ENCODE measurements at regions of chr1 and their contacts with region 1.

Region 1: DNA sequence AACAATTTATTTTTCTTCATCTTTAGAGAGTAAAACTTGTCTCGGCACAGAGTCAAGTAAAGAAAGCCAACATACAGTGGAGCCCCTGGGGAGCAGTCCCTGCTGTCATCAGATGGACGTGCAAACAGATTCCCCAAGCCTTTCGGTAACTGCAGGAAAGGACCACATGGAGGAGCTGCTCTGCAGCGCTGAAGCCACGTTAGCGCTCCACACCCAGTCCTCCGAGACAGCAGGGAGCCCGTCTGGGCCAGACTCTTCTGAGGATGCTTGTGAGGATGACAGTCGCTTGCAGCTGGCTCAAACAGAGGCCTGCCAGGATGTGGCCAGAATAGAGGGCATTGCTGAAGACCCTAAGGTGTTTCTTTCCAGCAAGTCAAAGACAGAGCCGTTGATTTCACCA is 77.1 kb upstream of the SCCPDH start:
- DNase-seq: no peak
- H3K4me3 ChIP-seq: no peak overlapping the region
- H3K27ac ChIP-seq: no peak overlapping the region
- H3K4me1 ChIP-seq: no peaks in the 10 kb centered on the region
- H3K27me3 ChIP-seq: no peaks in the 10 kb centered on the region
- CTCF ChIP-seq: peak in 1 of 4 experiments; percentile 21
- POLR2A ChIP-seq: no peak

Region 2: DNA sequence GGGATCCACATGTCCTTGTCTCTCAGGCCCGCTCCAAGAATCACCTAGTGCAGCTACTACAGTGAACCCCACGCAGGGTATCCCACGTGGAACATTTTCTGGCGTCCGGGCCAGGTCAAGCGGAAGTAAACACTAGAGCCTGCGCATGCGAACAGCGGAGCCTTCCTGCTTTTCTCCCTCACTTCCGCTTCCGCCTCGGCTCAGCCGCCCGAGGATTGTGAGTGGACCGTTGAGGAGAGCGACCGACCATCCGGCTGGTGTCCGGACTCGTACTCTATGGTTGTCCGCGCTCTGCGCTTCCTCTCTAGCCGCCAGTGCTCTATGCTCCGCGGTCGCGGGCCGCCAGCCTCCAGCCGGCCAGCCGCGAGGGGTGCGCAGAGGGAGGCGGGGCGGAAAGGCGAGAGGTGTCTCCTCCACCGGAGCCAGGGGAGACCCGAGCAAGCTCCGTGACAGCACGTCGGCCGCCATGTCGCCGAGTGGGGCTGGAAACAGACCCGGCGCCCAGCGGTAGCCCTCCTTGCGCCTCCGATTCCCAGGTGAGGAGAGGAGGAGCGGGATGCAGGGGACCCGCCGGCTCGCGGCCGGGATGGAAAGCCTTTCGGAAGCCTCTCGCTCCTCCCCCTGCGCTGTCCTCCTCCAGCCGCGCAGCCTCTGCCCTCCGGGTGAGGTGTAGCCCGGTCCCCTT is 80.8 kb before region 1 on chr1 and contains the starts of genes CNST and TFB2M:
- intact Hi-C with region 1: loop called (anchors 10 kb)
- DNase-seq: peak; percentile 98
- H3K4me3 ChIP-seq: peak within 1 kb of the TSS; percentile 77 to 94
- H3K27ac ChIP-seq: peak within 1 kb of the TSS; percentile 92 to 94
- H3K4me1 ChIP-seq: no peaks in the 10 kb centered on the region
- H3K27me3 ChIP-seq: no peaks in the 10 kb centered on the region
- CTCF ChIP-seq: peak in 2 of 4 experiments; percentile 10 to 31
- POLR2A ChIP-seq: peak; percentile 86
- total RNA-seq, gene CNST: 19.4 to 52.6 TPM
- total RNA-seq, gene TFB2M: 10.3 to 15.1 TPM

Region 3: GRCh38 chr1:246577720-246578106 is 69.4 kb before region 1 on chr1:
- intact Hi-C with region 1: no loop called
- DNase-seq: no peak
- H3K4me3 ChIP-seq: no peak overlapping the region
- H3K27ac ChIP-seq: no peak overlapping the region
- H3K4me1 ChIP-seq: no peaks in the 10 kb centered on the region
- H3K27me3 ChIP-seq: no peaks in the 10 kb centered on the region
- CTCF ChIP-seq: no peak
- POLR2A ChIP-seq: no peak

Measured in prostate gland (tissue), 2 donors.